ENCODE measurements at regions of chrX and their contacts with region 1.

Region 1: DNA sequence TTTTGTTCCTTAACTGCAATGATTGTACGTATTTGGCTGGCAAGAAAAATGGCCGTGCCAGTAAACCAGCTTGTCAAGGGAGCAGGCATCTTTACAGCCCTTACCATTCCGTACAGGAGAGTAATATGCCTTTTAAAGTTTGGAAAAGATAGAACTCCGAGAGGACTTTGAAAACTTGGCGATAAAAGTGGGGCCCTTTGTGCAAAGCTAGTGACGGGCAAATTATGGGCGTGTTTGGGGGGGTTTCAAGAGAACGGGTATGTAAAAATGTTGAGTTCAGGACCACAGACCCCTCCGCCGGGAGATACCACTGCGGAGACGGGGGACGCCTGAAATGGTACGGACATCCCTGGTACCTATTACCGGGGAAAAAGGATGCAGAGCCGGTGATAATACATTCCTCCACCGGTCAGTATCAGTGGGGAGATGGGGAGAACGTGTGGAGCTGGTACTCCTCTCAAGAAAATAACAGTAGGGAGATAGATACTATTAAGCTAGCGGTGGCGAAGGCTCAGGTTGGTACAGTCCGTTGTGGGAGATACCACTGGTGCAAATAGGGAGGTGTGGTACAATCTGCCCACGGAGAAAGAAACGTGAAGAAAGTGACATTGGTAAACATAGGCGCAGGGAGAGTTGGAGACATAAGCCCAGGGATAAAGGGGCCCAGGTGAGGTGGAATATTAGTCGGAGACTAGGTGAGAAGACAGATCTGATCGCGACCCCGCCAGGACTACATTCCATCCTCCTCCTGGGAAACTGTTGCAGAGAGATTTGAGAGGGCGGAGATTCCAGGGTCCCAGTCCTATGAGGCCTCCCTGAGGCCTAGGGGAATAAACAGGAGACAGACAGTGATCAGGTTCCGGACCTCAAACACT is 14.5 kb downstream of the SPACA5 start:
- DNase-seq: peak; percentile 81
- ATAC-seq: peak; percentile 84
- H3K4me3 ChIP-seq: peak overlapping the region; percentile 87
- H3K27ac ChIP-seq: peak overlapping the region; percentile 100
- H3K4me1 ChIP-seq: no peaks in the 10 kb centered on the region
- H3K27me3 ChIP-seq: no peaks in the 10 kb centered on the region
- CTCF ChIP-seq: no peak
- POLR2A ChIP-seq: no peak
- RAD21 ChIP-seq: no peak

Region 2: GRCh38 chrX:47193475-47194193 is 827.6 kb before region 1 on chrX and contains the start of gene UBA1:
- CTCF ChIA-PET with region 1: no interaction called
- POLR2A ChIA-PET with region 1: no interaction called
- dilution Hi-C with region 1: no loop called
- in situ Hi-C with region 1: no loop called
- intact Hi-C with region 1: loop called (anchors 2 kb)
- DNase-seq: peak; percentile 95
- ATAC-seq: peak; percentile 82
- H3K4me3 ChIP-seq: peak within 1 kb of the TSS; percentile 74
- H3K27ac ChIP-seq: peak within 1 kb of the TSS; percentile 87
- H3K4me1 ChIP-seq: peaks cover 24% of the 10 kb centered on the region
- H3K27me3 ChIP-seq: no peaks in the 10 kb centered on the region; the same call in 1 of the 2 replicates
- CTCF ChIP-seq: peak; percentile 92
- POLR2A ChIP-seq: peak; percentile 94
- RAD21 ChIP-seq: peak; percentile 92
- total RNA-seq, gene UBA1: 256 and 299 TPM in 2 replicates

Region 3: GRCh38 chrX:47497273-47497672 is 524.0 kb before region 1 on chrX:
- CTCF ChIA-PET with region 1: no interaction called
- POLR2A ChIA-PET with region 1: no interaction called
- dilution Hi-C with region 1: no loop called
- in situ Hi-C with region 1: no loop called
- intact Hi-C with region 1: loop called (anchors 5 kb)
- DNase-seq: peak; percentile 38
- ATAC-seq: no peak
- H3K4me3 ChIP-seq: no peak overlapping the region
- H3K27ac ChIP-seq: no peak overlapping the region
- H3K4me1 ChIP-seq: peaks cover 3% of the 10 kb centered on the region; the same call in 1 of the 2 replicates
- H3K27me3 ChIP-seq: peaks cover 3% of the 10 kb centered on the region
- CTCF ChIP-seq: peak; percentile 59
- POLR2A ChIP-seq: no peak
- RAD21 ChIP-seq: peak; percentile 72

Region 4: DNA sequence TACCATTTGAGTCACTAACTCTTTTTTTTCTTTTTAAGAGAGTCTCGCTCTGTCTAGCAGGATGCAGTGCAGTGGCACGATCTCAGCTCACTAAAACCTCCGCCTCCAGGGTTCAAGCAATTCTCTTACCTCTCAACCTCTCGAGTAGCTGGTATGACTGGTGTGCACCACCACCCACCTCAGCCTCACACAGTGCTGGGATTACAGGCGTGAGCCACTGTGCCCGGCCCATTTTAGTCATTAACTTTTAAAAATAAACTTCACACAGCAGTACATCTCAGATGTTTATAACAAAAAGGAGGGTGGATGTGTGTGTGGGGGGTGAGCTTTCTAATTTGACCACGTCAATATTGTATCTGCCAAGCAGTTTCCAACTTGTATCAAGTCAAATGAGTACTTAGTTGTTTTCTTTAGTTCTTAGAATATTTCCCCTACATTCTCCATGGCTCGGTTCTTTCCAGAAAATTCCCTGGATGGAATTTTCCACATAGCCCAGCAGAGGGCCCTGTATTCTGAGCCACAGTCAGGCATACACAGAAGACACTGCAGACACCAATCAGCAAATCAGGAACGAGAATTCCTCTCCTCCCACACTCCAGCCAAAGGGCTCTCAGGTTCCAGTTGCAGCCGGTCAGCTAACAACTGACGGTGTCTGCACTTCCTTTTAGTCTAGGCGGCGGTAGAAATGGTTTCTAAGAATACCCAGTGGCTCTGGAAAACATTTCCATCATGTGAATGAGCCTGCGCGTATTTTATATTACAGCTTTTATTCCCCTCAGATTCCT is 480.3 kb before region 1 on chrX:
- CTCF ChIA-PET with region 1: no interaction called
- POLR2A ChIA-PET with region 1: no interaction called
- dilution Hi-C with region 1: no loop called
- in situ Hi-C with region 1: loop called (anchors 25 kb)
- intact Hi-C with region 1: no loop called
- DNase-seq: peak; percentile 92
- ATAC-seq: peak; percentile 99
- H3K4me3 ChIP-seq: no peak overlapping the region
- H3K27ac ChIP-seq: peak overlapping the region; percentile 15; the same call in 1 of the 2 replicates
- H3K4me1 ChIP-seq: no peaks in the 10 kb centered on the region
- H3K27me3 ChIP-seq: no peaks in the 10 kb centered on the region
- CTCF ChIP-seq: peak; percentile 64
- POLR2A ChIP-seq: no peak; the same call in 1 of the 2 replicates
- RAD21 ChIP-seq: peak; percentile 61

Region 5: GRCh38 chrX:47560831-47561652 is 460.2 kb before region 1 on chrX and contains the start of gene ARAF:
- CTCF ChIA-PET with region 1: no interaction called
- POLR2A ChIA-PET with region 1: no interaction called
- dilution Hi-C with region 1: no loop called
- in situ Hi-C with region 1: no loop called
- intact Hi-C with region 1: loop called (anchors 5 kb)
- DNase-seq: peak; percentile 99
- ATAC-seq: peak; percentile 89
- H3K4me3 ChIP-seq: peak within 1 kb of the TSS; percentile 72
- H3K27ac ChIP-seq: peak within 1 kb of the TSS; percentile 96
- H3K4me1 ChIP-seq: 0 out of 2 replicates have a peak, but pooled peaks cover 1% of the 10 kb centered on the region
- H3K27me3 ChIP-seq: no peaks in the 10 kb centered on the region
- CTCF ChIP-seq: no peak
- POLR2A ChIP-seq: peak; percentile 76; the same call in 1 of the 2 replicates
- RAD21 ChIP-seq: no peak
- total RNA-seq, gene ARAF: 9.1 and 10.8 TPM in 2 replicates

Region 6: GRCh38 chrX:47836164-47837072 is 184.8 kb before region 1 on chrX and contains the start of gene ZNF81:
- CTCF ChIA-PET with region 1: no interaction called
- POLR2A ChIA-PET with region 1: no interaction called
- dilution Hi-C with region 1: no loop called
- in situ Hi-C with region 1: loop called (anchors 10 kb)
- intact Hi-C with region 1: loop called (anchors 1 kb)
- DNase-seq: peak; percentile 96
- ATAC-seq: peak; percentile 97
- H3K4me3 ChIP-seq: peak within 1 kb of the TSS; percentile 65
- H3K27ac ChIP-seq: peak within 1 kb of the TSS; percentile 78
- H3K4me1 ChIP-seq: no peaks in the 10 kb centered on the region
- H3K27me3 ChIP-seq: no peaks in the 10 kb centered on the region
- CTCF ChIP-seq: no peak
- POLR2A ChIP-seq: peak; percentile 73
- RAD21 ChIP-seq: no peak
- total RNA-seq, gene ZNF81: 4.5 and 5.6 TPM in 2 replicates

Region 7: GRCh38 chrX:47927212-47927611 is 94.1 kb before region 1 on chrX:
- CTCF ChIA-PET with region 1: no interaction called
- POLR2A ChIA-PET with region 1: no interaction called
- dilution Hi-C with region 1: no loop called
- in situ Hi-C with region 1: no loop called
- intact Hi-C with region 1: no loop called
- DNase-seq: no peak
- ATAC-seq: no peak
- H3K4me3 ChIP-seq: no peak overlapping the region
- H3K27ac ChIP-seq: no peak overlapping the region
- H3K4me1 ChIP-seq: no peaks in the 10 kb centered on the region
- H3K27me3 ChIP-seq: no peaks in the 10 kb centered on the region
- CTCF ChIP-seq: no peak
- POLR2A ChIP-seq: no peak
- RAD21 ChIP-seq: no peak

Region 8: DNA sequence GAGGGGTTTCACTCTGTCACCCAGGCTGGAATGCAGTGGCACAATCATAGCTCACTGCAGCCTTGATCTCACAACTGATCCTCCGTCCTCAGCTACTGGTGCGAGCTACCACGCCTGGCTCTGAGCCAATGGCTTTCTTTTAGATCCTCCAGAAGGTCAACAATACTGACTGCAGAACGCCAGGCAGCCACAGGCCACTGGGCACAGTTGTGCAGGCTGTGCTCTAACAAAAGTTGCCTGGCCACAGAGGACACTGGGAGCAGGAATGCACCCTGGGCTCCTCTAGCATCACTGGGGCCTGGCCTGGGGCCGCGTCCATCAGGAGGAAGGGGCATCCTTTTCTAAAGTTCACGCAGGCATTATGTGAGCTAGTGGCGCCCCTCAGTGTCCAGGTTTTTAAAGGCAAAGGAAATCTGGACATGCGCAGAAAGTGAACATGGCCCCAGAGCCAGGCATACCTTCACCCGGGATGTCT is 472.7 kb after region 1 on chrX:
- CTCF ChIA-PET with region 1: no interaction called
- POLR2A ChIA-PET with region 1: no interaction called
- dilution Hi-C with region 1: no loop called
- in situ Hi-C with region 1: no loop called
- intact Hi-C with region 1: loop called (anchors 5 kb)
- DNase-seq: peak; percentile 38
- ATAC-seq: peak; percentile 55
- H3K4me3 ChIP-seq: no peak overlapping the region
- H3K27ac ChIP-seq: no peak overlapping the region
- H3K4me1 ChIP-seq: peaks cover 6% of the 10 kb centered on the region
- H3K27me3 ChIP-seq: no peaks in the 10 kb centered on the region
- CTCF ChIP-seq: peak; percentile 52
- POLR2A ChIP-seq: no peak
- RAD21 ChIP-seq: peak; percentile 59